ENCODE measurements at regions of chr12 and their contacts with region 1.

Region 1: DNA sequence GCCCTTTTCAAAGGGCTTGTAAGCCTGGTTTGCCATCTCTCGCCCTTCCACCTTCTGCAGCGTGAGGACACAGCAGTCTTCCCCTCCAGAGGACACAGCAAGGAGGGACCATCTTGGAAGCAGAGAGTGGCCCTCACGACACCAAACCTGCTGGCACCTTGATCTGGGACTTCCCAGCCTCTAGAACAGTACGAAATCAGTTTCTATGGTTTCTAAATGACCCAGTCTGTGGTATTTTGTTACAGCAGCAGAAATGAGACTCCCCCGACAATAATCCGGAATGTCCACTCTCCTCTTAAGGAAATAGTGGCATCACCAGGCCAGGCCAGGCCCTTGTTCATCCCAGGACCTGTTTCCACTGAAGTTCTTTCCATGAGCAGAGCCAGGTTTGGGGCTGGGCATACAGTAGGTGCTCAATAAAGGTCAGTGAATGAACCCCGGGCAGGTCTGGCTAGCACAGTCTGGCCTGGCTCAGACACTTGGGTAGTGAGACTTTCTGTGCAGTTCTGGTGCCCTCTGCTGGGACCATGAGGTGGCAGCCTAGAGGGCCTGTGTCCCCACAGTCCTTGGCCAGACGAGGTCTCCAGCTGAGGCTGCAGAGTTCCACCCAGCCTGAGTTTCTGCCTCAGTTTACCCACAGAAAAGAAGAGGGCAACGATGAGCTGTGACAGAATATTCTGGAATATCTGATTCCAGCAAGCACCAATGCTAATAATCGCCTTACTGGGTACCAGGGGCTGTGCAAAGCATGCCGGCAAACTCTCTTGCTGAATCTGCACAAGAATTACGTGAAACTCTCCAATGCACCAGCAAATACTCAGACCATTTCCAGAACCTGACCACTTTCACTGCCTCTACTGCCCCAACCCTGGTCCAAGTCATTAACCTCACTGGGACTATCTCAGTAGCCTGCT is 14.0 kb downstream of the ABCB9 start:
- DNase-seq: peak; percentile 84
- ATAC-seq: peak; percentile 95
- H3K4me3 ChIP-seq: no peak overlapping the region
- H3K27ac ChIP-seq: peak overlapping the region; percentile 85
- H3K4me1 ChIP-seq: peaks cover 23% of the 10 kb centered on the region
- H3K27me3 ChIP-seq: no peaks in the 10 kb centered on the region
- CTCF ChIP-seq: peak; percentile 95

Region 2: DNA sequence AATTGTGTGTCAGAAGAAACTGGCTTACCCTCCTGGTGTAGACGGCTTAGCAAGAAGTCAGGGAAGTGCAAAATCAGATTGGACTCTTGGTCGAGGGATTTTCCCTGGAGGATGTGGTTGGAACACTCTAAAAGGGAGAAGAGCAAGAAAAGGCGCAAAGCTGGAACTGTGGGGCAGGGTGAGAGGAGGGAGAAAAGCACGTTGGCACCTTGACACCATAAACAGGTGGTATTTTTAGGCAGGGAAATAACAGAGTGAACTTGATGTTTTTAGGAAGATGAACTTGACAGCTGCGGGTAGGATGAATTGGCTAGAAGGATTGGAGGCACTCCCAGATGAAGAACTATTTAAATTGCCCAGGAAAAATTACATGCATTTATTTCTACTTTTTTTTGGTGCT is 316.8 kb before region 1 on chr12:
- CTCF ChIA-PET with region 1: no interaction called
- POLR2A ChIA-PET with region 1: no interaction called
- intact Hi-C with region 1: loop called (anchors 10 kb)
- DNase-seq: no peak
- ATAC-seq: no peak
- H3K4me3 ChIP-seq: no peak overlapping the region
- H3K27ac ChIP-seq: no peak overlapping the region
- H3K4me1 ChIP-seq: no peaks in the 10 kb centered on the region
- H3K27me3 ChIP-seq: no peaks in the 10 kb centered on the region
- CTCF ChIP-seq: no peak

Region 3: DNA sequence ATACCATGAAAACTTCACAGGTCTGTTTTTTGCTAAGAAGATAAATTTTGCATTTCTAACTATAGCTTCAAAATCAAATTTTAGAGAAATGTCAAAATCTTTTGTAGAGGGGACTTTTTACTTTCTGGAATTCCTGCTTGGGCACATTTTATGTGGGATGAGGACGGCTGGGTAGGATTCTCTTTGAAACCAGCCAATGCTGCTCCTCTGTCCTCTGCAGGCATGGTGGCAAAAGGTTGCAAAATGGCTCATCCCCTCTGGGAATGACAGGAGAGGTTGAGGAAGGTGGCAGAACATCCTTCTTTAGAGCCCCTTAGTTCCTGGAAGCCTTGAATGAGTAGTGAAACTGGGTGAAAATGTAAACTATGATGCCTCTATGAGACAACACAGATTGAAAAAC is 184.5 kb before region 1 on chr12:
- CTCF ChIA-PET with region 1: no interaction called
- POLR2A ChIA-PET with region 1: no interaction called
- intact Hi-C with region 1: no loop called
- DNase-seq: no peak
- ATAC-seq: no peak
- H3K4me3 ChIP-seq: no peak overlapping the region
- H3K27ac ChIP-seq: no peak overlapping the region
- H3K4me1 ChIP-seq: no peaks in the 10 kb centered on the region
- H3K27me3 ChIP-seq: no peaks in the 10 kb centered on the region
- CTCF ChIP-seq: no peak

Region 4: GRCh38 chr12:122793685-122794106 is 158.5 kb before region 1 on chr12:
- CTCF ChIA-PET with region 1: interaction called, 3 read pairs
- POLR2A ChIA-PET with region 1: no interaction called
- intact Hi-C with region 1: loop called (anchors 1 kb)
- DNase-seq: peak; percentile 76
- ATAC-seq: peak; percentile 86
- H3K4me3 ChIP-seq: no peak overlapping the region
- H3K27ac ChIP-seq: no peak overlapping the region
- H3K4me1 ChIP-seq: peaks cover under 1% of the 10 kb centered on the region; the same call in 1 of the 2 replicates
- H3K27me3 ChIP-seq: no peaks in the 10 kb centered on the region
- CTCF ChIP-seq: peak; percentile 88

Region 5: DNA sequence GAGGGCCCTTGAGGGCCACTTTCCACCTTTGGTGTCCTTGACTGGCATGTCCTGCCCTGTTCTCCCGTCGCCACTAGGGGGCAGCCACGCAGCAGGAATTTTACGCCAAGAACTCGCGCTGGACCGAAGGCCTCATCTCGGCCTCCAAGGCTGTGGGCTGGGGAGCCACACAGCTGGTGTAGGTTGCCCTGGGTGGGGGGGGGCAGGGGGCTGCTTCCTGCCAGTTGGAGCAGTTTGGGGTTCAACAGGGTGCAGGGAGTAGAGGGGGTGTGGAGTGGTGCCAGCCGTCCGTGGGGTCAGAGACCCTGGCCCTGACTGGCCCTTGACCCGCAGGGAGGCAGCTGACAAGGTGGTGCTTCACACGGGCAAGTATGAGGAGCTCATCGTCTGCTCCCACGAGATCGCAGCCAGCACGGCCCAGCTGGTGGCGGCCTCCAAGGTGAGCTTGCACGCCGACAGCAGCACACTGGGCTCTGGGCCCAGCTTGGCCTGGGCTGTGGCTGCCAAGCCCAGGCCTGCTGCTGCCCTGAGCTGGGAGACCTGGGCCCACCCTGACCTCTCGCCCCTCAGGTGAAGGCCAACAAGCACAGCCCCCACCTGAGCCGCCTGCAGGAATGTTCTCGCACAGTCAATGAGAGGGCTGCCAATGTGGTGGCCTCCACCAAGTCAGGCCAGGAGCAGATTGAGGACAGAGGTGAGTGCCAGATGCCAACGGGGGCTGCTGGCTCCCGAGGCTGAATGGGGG is 91.7 kb before region 1 on chr12:
- CTCF ChIA-PET with region 1: interaction called, 4 read pairs
- POLR2A ChIA-PET with region 1: no interaction called
- intact Hi-C with region 1: loop called (anchors 1 kb)
- DNase-seq: peak; percentile 88
- ATAC-seq: peak; percentile 78
- H3K4me3 ChIP-seq: no peak overlapping the region
- H3K27ac ChIP-seq: no peak overlapping the region
- H3K4me1 ChIP-seq: no peaks in the 10 kb centered on the region
- H3K27me3 ChIP-seq: no peaks in the 10 kb centered on the region
- CTCF ChIP-seq: peak; percentile 95

Measured in PC-3 (cell line).